H1 (cell line): ENCODE measurements at regions of chr5 and their contacts with region 1.

Region 1: GRCh38 chr5:36690041-36690961 is 83.9 kb downstream of the SLC1A3 start:
- DNase-seq: peak; percentile 62 to 89
- H3K4me3 ChIP-seq: peak overlapping the region; percentile 41 to 74 (median 68)
- H3K27ac ChIP-seq: no peak overlapping the region
- H3K4me1 ChIP-seq: peaks cover 0 to 1% (median 0%) of the 10 kb centered on the region in 4 experiments; a peak in 1 of 7 replicates
- H3K27me3 ChIP-seq: peaks cover 3 to 18% (median 13%) of the 10 kb centered on the region in 4 experiments; a peak in 6 of 7 replicates
- CTCF ChIP-seq: peak; percentile 82 to 98 (median 94)
- EP300 ChIP-seq: no peak
- POLR2A ChIP-seq: peak in 1 of 2 experiments; percentile 62; a peak in 2 of 3 replicates
- RAD21 ChIP-seq: peak; percentile 46 to 63

Region 2: GRCh38 chr5:36272136-36272690 is 418.1 kb before region 1 on chr5:
- CTCF ChIA-PET with region 1: no interaction called
- POLR2A ChIA-PET with region 1: no interaction called
- DNase-seq: no peak
- H3K4me3 ChIP-seq: no peak overlapping the region
- H3K27ac ChIP-seq: no peak overlapping the region
- H3K4me1 ChIP-seq: peaks cover 0 to 4% (median 0%) of the 10 kb centered on the region in 4 experiments; a peak in 1 of 7 replicates
- H3K27me3 ChIP-seq: no peaks in the 10 kb centered on the region; a peak in 1 of 7 replicates
- CTCF ChIP-seq: no peak
- EP300 ChIP-seq: no peak
- POLR2A ChIP-seq: no peak
- RAD21 ChIP-seq: no peak

Region 3: GRCh38 chr5:36397901-36398536 is 292.3 kb before region 1 on chr5:
- CTCF ChIA-PET with region 1: interaction called, 15 read pairs
- POLR2A ChIA-PET with region 1: no interaction called
- DNase-seq: no peak
- H3K4me3 ChIP-seq: no peak overlapping the region
- H3K27ac ChIP-seq: no peak overlapping the region
- H3K4me1 ChIP-seq: no peaks in the 10 kb centered on the region
- H3K27me3 ChIP-seq: no peaks in the 10 kb centered on the region
- CTCF ChIP-seq: peak in 2 of 3 experiments; percentile 36 to 47; a peak in 2 of 4 replicates
- EP300 ChIP-seq: no peak
- POLR2A ChIP-seq: no peak
- RAD21 ChIP-seq: peak; percentile 69 to 74

Region 4: GRCh38 chr5:36414869-36415282 is 275.4 kb before region 1 on chr5:
- CTCF ChIA-PET with region 1: interaction called, 246 read pairs
- POLR2A ChIA-PET with region 1: interaction called, 4 read pairs
- DNase-seq: no peak
- H3K4me3 ChIP-seq: no peak overlapping the region
- H3K27ac ChIP-seq: no peak overlapping the region
- H3K4me1 ChIP-seq: peaks cover 4 to 17% (median 8%) of the 10 kb centered on the region in 4 experiments; a peak in 5 of 7 replicates
- H3K27me3 ChIP-seq: peaks cover 6 to 36% (median 24%) of the 10 kb centered on the region in 4 experiments; a peak in 6 of 7 replicates
- CTCF ChIP-seq: peak in 1 of 3 experiments; percentile 48; a peak in 1 of 4 replicates
- EP300 ChIP-seq: no peak
- POLR2A ChIP-seq: no peak
- RAD21 ChIP-seq: peak; percentile 56 to 70

Region 5: GRCh38 chr5:36590513-36591286 is 99.6 kb before region 1 on chr5:
- CTCF ChIA-PET with region 1: interaction called, 11 read pairs
- POLR2A ChIA-PET with region 1: interaction called, 3 read pairs
- DNase-seq: no peak
- H3K4me3 ChIP-seq: no peak overlapping the region
- H3K27ac ChIP-seq: no peak overlapping the region
- H3K4me1 ChIP-seq: peaks cover 4 to 8% (median 7%) of the 10 kb centered on the region in 4 experiments; a peak in 5 of 7 replicates
- H3K27me3 ChIP-seq: no peaks in the 10 kb centered on the region
- CTCF ChIP-seq: no peak
- EP300 ChIP-seq: no peak
- POLR2A ChIP-seq: no peak
- RAD21 ChIP-seq: no peak

Region 6: GRCh38 chr5:36619012-36619635 is 71.2 kb before region 1 on chr5:
- CTCF ChIA-PET with region 1: interaction called, 29 read pairs
- POLR2A ChIA-PET with region 1: interaction called, 3 read pairs
- DNase-seq: peak; percentile 64 to 78
- H3K4me3 ChIP-seq: peak overlapping the region in 3 of 4 experiments; percentile 11 to 15 (median 12); a peak in 3 of 8 replicates
- H3K27ac ChIP-seq: peak overlapping the region; percentile 44; the same call in 1 of the 2 replicates
- H3K4me1 ChIP-seq: peaks cover 0 to 18% (median 9%) of the 10 kb centered on the region in 4 experiments; a peak in 5 of 7 replicates
- H3K27me3 ChIP-seq: no peaks in the 10 kb centered on the region
- CTCF ChIP-seq: no peak
- EP300 ChIP-seq: peak in 1 of 2 experiments; percentile 71; a peak in 1 of 3 replicates
- POLR2A ChIP-seq: no peak
- RAD21 ChIP-seq: no peak

Region 7: DNA sequence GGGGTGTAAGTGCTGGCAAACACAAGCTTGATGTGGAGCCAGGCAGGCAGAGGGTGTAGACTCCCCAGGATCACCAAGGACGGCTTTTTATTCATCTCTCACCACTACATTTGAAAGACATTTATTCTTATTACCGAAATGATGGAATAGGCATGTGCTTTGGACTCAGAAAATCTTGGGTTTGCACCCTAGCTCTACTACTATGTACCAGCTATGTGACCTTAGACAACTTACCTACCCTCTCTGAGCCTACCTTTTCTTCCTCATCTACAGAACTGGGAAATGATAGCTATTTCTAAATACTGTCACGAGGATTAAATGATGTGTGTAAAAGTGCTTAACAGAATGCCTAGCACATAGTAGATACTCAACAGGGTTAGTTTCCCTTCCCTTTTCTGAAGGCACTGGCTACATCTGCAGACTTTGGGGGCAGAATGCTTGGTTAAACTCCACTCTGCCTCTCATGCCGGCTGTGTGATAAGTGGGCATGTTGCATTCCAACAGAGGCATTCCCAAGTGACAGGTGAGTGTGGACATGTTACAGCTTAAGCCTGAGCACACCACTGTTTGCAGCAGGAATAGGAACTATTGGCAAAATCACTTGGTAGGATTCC is 10.9 kb after region 1 on chr5:
- CTCF ChIA-PET with region 1: interaction called, 10 read pairs
- POLR2A ChIA-PET with region 1: no interaction called
- DNase-seq: no peak
- H3K4me3 ChIP-seq: no peak overlapping the region
- H3K27ac ChIP-seq: no peak overlapping the region
- H3K4me1 ChIP-seq: peaks cover 0 to 2% (median 0%) of the 10 kb centered on the region in 4 experiments; a peak in 1 of 7 replicates
- H3K27me3 ChIP-seq: no peaks in the 10 kb centered on the region
- CTCF ChIP-seq: no peak
- EP300 ChIP-seq: no peak
- POLR2A ChIP-seq: no peak
- RAD21 ChIP-seq: no peak